Vagina (tissue), 2 donors: ENCODE measurements at regions of chr11 and their contacts with region 1.

Region 1: DNA sequence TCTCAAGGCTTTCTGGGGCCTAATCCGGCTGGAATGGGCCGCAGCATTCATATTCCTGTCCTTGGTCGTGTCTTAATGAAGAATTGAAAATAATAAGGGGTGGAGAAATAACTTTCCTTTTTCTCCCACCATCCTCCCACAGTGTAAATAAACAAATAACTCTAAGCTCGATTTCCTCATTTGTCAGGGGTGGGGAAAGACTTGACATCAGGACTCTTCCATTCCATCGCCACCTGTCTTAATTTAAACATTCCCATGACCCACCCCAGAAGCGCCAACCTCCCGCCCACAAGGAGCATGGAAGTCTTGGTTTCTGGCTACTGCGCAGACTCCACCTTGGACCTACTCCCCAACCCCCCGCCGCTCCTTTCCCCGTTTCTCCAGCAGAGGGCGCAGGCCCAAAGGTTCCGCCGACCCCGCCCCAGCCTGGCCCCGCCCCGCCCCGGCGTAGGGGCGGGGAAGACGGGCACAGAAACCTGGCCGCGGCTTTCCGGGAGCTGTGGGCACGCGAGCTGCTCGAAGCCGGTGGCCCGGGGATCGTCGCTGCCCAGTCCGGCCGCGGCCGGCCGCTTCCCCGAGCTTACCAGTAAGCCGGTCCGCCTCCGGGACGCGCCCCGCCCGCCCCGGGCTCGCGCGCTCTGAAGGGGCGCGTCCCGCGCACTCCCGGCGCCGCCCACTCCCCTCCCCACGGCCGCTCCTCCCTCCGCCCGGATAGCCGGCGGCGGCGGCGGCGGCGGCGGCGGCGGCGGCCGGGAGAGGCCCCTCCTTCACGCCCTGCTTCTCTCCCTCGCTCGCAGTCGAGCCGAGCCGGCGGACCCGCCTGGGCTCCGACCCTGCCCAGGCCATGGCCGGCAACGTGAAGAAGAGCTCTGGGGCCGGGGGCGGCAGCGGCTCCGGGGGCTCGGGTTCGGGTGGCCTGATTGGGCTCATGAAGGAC is at the start of gene CBL:
- DNase-seq: no peak
- H3K4me3 ChIP-seq: peak within 1 kb of the TSS; percentile 75 to 99
- H3K27ac ChIP-seq: peak within 1 kb of the TSS; percentile 95
- H3K4me1 ChIP-seq: peaks cover 23% of the 10 kb centered on the region
- H3K27me3 ChIP-seq: no peaks in the 10 kb centered on the region
- CTCF ChIP-seq: peak; percentile 65 to 91 (median 65)
- POLR2A ChIP-seq: peak in 1 of 2 donors; percentile 80
- total RNA-seq, gene CBL: 15.5 TPM

Region 2: DNA sequence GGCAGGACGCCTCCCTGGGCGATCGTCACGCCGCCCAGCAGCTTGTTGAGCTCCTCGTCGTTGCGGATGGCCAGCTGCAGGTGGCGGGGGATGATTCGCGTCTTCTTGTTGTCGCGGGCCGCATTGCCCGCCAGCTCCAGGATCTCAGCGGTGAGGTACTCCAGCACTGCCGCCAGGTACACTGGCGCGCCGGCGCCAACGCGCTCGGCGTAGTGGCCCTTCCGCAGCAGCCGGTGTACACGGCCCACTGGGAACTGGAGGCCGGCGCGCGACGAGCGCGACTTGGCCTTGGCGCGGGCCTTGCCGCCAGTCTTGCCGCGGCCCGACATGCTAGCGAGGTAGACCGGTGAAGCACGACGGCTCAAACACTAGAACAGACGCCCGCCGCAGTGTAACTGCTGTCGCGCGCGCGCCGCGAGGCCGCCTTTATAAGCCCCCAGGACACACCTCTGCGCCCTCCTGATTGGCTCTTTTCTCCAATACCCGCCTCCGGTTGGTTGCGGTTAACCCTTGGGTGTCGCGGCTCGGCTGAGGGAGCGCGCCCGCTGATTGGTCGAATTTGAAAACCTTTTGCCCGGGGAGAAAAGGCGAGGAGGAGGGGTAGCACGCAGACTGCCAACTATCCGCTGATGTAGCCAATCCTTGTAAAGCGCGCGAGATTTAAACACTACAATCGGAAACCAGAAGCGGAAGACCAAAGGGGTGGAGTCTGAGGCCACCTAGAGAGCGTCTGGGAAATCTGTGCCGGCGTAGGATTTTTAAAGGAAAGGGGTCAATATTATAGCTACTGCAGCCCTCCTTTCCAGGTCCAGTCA is 110.6 kb before region 1 on chr11:
- intact Hi-C with region 1: loop called (anchors 10 kb)
- DNase-seq: peak; percentile 99 to 100
- H3K4me3 ChIP-seq: peak overlapping the region; percentile 59 to 92
- H3K27ac ChIP-seq: peak overlapping the region; percentile 95
- H3K4me1 ChIP-seq: peaks cover 34% of the 10 kb centered on the region
- H3K27me3 ChIP-seq: no peaks in the 10 kb centered on the region
- CTCF ChIP-seq: peak in 1 of 3 experiments; percentile 13
- POLR2A ChIP-seq: peak in 1 of 2 donors; percentile 99

Region 3: DNA sequence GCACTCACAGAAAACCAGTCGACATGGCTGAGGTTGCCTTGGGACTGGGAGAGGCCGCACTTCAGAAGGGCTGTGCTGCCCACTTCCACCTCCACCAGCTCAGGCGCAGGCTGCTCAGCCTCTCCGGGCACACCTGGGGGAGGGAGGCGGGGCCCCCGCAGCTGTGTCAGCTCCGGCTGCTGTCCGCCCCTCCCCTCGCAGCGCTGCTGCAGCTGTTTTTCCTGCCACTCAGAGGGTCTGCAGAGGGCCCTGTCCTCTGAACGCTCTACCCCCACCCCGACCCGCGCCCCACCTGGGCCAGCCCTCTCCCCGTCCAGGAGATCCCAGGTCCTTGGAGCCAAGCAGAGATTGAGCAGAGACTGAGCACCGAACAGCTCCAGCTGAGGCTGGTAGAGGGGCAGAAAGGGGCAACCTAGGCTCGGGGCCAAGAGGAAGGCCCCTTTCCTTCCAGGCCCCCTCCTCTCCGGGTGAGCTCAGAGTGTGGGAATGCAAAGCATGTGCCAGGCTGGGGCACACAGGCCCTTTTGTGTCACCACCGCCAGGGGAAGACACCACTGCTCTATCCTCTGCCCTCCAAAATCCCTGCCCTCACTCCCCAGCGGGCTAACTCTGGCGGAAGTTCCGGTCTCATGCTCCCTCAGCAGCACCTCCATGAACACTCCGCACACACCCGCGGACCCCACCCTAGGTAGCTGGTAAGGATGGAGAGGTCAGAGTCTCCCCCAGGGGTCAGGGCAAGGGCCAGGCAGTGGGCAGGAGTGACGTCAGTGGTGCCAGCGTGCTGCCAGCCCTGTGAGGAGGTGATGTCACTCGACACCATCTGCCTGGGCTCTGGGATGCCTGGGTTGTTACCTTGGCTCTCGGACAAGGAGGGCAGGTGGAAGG is 109.5 kb after region 1 on chr11:
- intact Hi-C with region 1: loop called (anchors 5 kb)
- DNase-seq: no peak
- H3K4me3 ChIP-seq: peak overlapping the region; percentile 57 to 75
- H3K27ac ChIP-seq: peak overlapping the region; percentile 88
- H3K4me1 ChIP-seq: peaks cover 55% of the 10 kb centered on the region
- H3K27me3 ChIP-seq: no peaks in the 10 kb centered on the region
- CTCF ChIP-seq: no peak
- POLR2A ChIP-seq: no peak

Region 4: GRCh38 chr11:119432484-119433357 is 226.9 kb after region 1 on chr11:
- intact Hi-C with region 1: no loop called
- DNase-seq: no peak
- H3K4me3 ChIP-seq: peak overlapping the region; percentile 22
- H3K27ac ChIP-seq: peak overlapping the region; percentile 61
- H3K4me1 ChIP-seq: peaks cover 16% of the 10 kb centered on the region
- H3K27me3 ChIP-seq: no peaks in the 10 kb centered on the region
- CTCF ChIP-seq: no peak
- POLR2A ChIP-seq: no peak